ENCODE measurements at regions of chr15 and their contacts with region 1.

Region 1: DNA sequence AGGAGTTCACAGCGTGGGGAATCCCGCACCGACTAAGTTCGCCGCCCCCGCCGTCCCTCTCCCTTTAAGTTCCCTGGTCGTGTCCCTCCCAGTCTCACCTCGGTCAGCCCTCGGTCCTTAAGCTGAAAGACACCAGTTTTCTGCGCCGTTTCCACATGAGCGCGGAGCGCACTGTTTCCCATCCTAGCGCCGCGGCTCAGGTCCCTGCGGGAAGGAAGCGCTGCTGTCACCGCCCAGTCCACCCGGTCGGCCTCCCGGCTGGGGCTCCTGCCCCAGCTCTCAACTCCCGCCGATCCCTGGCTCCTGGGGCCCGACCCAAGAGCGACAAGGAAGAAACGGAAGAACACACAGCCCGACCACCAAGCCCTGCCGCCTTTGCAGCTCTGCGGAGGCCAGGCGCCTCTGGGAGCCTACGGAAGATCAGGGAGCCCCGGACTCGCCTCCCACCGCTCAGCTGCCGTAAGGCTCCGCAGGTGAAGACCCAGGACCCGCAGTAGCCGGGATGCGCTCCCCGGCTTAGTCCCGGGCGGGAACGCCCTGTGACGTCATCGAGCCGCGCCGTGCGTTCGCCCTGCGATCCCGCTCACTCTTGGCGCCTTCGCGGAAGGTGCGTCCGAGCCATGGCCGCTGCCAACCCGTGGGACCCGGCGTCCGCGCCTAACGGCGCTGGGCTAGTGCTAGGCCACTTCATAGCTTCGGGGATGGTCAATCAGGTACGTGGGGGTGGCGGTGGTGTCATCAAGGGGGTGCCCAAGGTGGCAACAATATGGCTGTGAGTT is at the starts of genes HAUS2 and LRRC57:
- DNase-seq: peak; percentile 93 to 94 (median 94)
- ATAC-seq: peak; percentile 92
- H3K4me3 ChIP-seq: peak within 1 kb of the TSS; percentile 98
- H3K27ac ChIP-seq: peak within 1 kb of the TSS; percentile 89
- H3K4me1 ChIP-seq: peaks cover 9 to 20% of the 10 kb centered on the region in 2 experiments
- H3K27me3 ChIP-seq: no peaks in the 10 kb centered on the region
- CTCF ChIP-seq: no peak
- EP300 ChIP-seq: no peak; the same call in 1 of the 2 replicates
- POLR2A ChIP-seq: peak; percentile 92
- RAD21 ChIP-seq: no peak
- polyA plus RNA-seq, gene HAUS2: 51.6 to 57.8 TPM
- polyA plus RNA-seq, gene LRRC57: 3.9 to 7.2 TPM

Region 2: DNA sequence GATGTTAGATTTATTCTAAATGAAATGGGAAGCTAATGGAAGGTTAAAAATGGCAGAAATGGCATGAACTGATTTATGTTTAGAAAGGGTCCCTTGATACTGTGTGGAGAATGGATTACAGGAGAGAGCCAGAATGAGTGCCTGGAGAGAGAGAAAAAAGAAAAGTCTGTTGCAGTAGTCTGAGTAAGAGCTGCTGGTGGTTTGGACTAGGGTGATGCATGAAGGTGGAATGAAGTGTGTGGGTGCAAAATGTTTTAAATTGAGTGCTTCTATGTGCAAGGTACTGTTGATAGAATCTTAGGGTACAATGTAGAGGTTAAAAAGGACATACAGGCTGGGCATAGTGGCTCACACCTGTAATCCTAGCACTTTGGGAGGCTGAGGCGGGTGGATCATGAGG is 899.7 kb before region 1 on chr15:
- CTCF ChIA-PET with region 1: no interaction called
- POLR2A ChIA-PET with region 1: no interaction called
- in situ Hi-C with region 1: no loop called
- intact Hi-C with region 1: no loop called
- DNase-seq: no peak
- ATAC-seq: no peak
- H3K4me3 ChIP-seq: no peak overlapping the region
- H3K27ac ChIP-seq: no peak overlapping the region
- H3K4me1 ChIP-seq: no peaks in the 10 kb centered on the region; a peak in 2 of 5 replicates
- H3K27me3 ChIP-seq: no peaks in the 10 kb centered on the region
- CTCF ChIP-seq: no peak
- EP300 ChIP-seq: no peak
- POLR2A ChIP-seq: no peak
- RAD21 ChIP-seq: no peak

Region 3: DNA sequence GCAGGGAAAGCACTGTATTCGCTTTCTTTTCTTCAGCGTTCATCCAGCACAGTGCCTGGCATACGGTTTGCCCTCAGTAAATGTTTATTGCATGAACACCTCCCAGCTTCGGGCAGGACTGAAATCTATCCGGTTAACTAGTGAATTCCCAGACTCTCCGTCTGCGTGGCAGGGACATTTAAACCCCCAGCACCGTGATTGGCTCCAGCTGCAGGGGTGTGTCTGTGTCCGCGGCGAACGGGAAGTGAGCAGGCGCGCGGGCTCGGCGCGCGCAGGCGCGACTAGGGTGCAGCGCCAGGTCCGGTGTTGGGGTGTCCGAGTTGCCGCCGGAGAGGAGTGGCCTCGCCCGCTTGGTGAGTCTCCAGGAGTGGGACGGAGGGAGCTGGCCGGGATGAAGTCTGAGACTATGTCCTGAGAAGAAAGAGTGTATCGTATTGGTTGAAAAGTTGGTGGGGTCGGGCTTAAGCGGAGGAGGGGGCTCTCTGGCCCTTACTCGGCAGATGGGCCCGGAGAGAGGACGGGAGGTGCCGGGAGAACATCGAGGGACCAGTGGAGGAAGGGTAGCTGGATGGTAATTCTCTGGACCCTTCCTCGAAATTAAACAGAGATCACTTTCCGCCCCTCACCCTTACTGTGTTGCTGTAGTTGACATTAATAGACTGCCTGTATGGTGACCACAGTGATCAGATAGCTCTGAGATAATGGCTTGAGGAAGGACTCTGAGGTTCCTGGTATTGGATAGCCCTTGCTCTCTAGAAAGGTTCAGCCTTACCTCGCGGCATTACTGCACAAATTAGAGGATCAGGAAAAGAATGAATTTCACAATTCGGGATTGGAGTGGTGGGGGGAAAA is 52.9 kb before region 1 on chr15 and contains the start of gene SNAP23:
- CTCF ChIA-PET with region 1: no interaction called
- POLR2A ChIA-PET with region 1: interaction called, 8 read pairs
- in situ Hi-C with region 1: no loop called
- intact Hi-C with region 1: loop called (anchors 2 kb)
- DNase-seq: peak; percentile 94 to 97 (median 96)
- ATAC-seq: peak; percentile 94
- H3K4me3 ChIP-seq: peak within 1 kb of the TSS; percentile 74
- H3K27ac ChIP-seq: peak within 1 kb of the TSS; percentile 84
- H3K4me1 ChIP-seq: peaks cover 20 to 30% of the 10 kb centered on the region in 2 experiments
- H3K27me3 ChIP-seq: no peaks in the 10 kb centered on the region
- CTCF ChIP-seq: no peak
- EP300 ChIP-seq: peak; percentile 46; the same call in 1 of the 2 replicates
- POLR2A ChIP-seq: peak; percentile 89
- RAD21 ChIP-seq: 0 out of 4 replicates have a peak, but pooled peaks of 1 of the 2 experiments have one; percentile 13
- polyA plus RNA-seq, gene SNAP23: 84.1 to 117 TPM

Region 4: GRCh38 chr15:42533246-42533645 is 15.2 kb before region 1 on chr15:
- CTCF ChIA-PET with region 1: no interaction called
- POLR2A ChIA-PET with region 1: interaction called, 31 read pairs
- in situ Hi-C with region 1: no loop called
- intact Hi-C with region 1: no loop called
- DNase-seq: no peak
- ATAC-seq: no peak
- H3K4me3 ChIP-seq: no peak overlapping the region
- H3K27ac ChIP-seq: no peak overlapping the region
- H3K4me1 ChIP-seq: no peaks in the 10 kb centered on the region; a peak in 2 of 5 replicates
- H3K27me3 ChIP-seq: no peaks in the 10 kb centered on the region
- CTCF ChIP-seq: no peak
- EP300 ChIP-seq: no peak
- POLR2A ChIP-seq: no peak
- RAD21 ChIP-seq: no peak

Region 5: GRCh38 chr15:42558739-42559138 is 10.3 kb after region 1 on chr15:
- CTCF ChIA-PET with region 1: no interaction called
- POLR2A ChIA-PET with region 1: interaction called, 14 read pairs
- in situ Hi-C with region 1: no loop called
- intact Hi-C with region 1: no loop called
- DNase-seq: no peak
- ATAC-seq: no peak
- H3K4me3 ChIP-seq: no peak overlapping the region
- H3K27ac ChIP-seq: no peak overlapping the region
- H3K4me1 ChIP-seq: peaks cover 0 to under 1% of the 10 kb centered on the region in 2 experiments; a peak in 1 of 5 replicates
- H3K27me3 ChIP-seq: no peaks in the 10 kb centered on the region
- CTCF ChIP-seq: no peak
- EP300 ChIP-seq: no peak
- POLR2A ChIP-seq: no peak
- RAD21 ChIP-seq: no peak

Region 6: DNA sequence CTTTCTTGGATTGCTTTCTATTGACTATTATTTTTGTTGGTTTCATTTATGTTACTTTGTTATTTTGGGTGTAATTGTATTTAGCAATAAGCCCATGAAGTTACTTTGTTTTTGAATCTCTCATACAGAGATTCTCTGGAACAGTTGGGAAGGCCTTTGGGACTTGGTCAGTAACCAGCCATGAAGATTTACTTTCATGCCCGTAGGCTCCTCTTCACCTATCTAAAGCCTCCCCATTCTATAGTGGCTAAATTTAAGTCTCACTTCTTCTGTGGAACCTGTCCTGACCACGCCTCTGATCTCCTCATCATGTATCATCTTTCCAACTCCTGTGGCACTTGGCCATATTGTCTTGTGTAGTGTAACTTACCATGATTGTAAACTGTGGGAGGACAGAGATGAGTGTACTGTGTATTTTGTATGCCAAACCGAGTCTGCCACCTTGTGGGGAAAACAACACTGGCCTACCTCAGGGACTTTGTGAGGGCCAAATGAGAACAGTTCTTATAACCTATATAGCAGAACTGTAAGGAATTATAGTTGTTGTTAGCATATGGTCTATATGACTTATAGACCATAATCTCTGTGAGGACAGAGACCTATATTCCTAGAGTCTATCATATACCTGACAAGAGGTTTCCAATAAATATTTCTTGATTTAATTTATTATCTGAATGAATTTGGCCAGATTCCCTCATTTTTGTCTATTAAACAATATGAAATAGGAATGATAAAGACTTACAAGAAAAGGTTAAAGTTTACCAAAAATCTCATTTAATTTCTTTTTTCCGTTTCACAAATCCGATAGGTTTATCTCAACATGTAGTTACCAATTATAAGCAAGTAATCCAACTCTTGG is 102.0 kb after region 1 on chr15:
- CTCF ChIA-PET with region 1: no interaction called
- POLR2A ChIA-PET with region 1: interaction called, 3 read pairs
- in situ Hi-C with region 1: no loop called
- intact Hi-C with region 1: loop called (anchors 10 kb)
- DNase-seq: peak; percentile 57 to 85 (median 68)
- ATAC-seq: peak; percentile 100
- H3K4me3 ChIP-seq: no peak overlapping the region
- H3K27ac ChIP-seq: no peak overlapping the region
- H3K4me1 ChIP-seq: peaks cover 0 to 3% of the 10 kb centered on the region in 2 experiments; a peak in 2 of 5 replicates
- H3K27me3 ChIP-seq: no peaks in the 10 kb centered on the region
- CTCF ChIP-seq: peak; percentile 74 to 89 (median 83)
- EP300 ChIP-seq: no peak
- POLR2A ChIP-seq: no peak
- RAD21 ChIP-seq: peak; percentile 87 to 95